ENCODE measurements at regions of chr1 and their contacts with region 1.

Region 1: DNA sequence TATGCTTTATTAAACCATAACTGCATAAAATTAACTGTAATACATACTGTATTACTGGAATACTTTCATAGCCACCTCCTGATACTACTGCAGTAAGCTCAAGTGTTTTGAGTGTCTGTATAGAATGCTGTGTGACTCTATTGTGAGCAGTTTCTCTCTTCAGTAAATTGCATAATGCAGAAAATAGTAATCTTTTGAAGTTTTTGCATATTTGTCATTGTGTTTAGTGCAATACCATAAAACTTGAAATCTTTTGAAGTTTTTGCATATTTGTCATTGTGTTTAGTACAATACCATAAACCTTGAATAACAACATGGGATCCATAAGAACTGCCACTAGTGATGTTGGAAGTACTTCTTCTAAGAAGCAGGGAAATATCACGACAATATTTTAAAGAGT is 11.2 kb downstream of the TPR start:
- DNase-seq: no peak
- H3K4me3 ChIP-seq: no peak overlapping the region
- H3K27ac ChIP-seq: no peak overlapping the region
- H3K4me1 ChIP-seq: no peaks in the 10 kb centered on the region
- H3K27me3 ChIP-seq: no peaks in the 10 kb centered on the region
- CTCF ChIP-seq: no peak
- POLR2A ChIP-seq: no peak

Region 2: DNA sequence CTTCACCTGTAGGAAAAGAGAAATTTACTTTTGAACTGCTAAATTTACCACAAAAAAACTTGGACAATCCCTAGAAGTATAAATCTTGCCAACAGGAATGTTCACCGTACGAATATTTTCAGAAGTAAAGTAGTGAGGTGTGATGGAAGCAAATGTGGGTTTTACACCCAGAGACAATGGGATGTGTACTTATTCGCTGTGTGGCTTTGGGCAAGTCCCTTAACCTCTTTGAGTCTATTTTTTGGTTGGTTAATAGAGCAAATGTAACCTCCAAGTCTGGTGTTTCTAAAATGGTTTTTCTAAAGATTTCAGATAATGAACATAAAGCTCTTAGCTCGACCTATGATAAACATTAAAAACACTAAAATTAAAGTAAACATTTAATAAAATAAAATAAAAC is 40.0 kb before region 1 on chr1:
- intact Hi-C with region 1: loop called (anchors 5 kb)
- DNase-seq: no peak
- H3K4me3 ChIP-seq: no peak overlapping the region
- H3K27ac ChIP-seq: no peak overlapping the region
- H3K4me1 ChIP-seq: no peaks in the 10 kb centered on the region
- H3K27me3 ChIP-seq: no peaks in the 10 kb centered on the region
- CTCF ChIP-seq: no peak
- POLR2A ChIP-seq: no peak

Region 3: DNA sequence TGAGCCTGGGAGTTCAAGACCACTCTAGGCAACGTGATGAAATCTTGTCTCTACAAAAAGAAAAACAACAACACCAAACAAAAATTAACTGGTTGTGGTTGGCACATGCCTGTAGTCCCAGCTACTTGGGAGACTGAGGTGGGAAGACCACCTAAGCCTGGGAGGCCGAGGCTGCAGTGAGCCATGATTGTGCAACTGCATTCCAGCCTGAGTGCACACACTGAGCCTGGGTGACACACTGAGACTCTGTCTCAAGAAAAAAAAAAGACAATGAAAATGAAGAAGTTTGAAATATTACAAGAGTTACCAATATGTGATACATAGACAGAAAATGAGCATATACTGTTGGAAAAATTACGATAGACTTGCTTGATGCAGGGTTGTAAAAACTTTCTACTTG is 65.1 kb after region 1 on chr1:
- intact Hi-C with region 1: no loop called
- DNase-seq: no peak
- H3K4me3 ChIP-seq: no peak overlapping the region
- H3K27ac ChIP-seq: no peak overlapping the region
- H3K4me1 ChIP-seq: no peaks in the 10 kb centered on the region
- H3K27me3 ChIP-seq: no peaks in the 10 kb centered on the region
- CTCF ChIP-seq: no peak
- POLR2A ChIP-seq: no peak

Region 4: DNA sequence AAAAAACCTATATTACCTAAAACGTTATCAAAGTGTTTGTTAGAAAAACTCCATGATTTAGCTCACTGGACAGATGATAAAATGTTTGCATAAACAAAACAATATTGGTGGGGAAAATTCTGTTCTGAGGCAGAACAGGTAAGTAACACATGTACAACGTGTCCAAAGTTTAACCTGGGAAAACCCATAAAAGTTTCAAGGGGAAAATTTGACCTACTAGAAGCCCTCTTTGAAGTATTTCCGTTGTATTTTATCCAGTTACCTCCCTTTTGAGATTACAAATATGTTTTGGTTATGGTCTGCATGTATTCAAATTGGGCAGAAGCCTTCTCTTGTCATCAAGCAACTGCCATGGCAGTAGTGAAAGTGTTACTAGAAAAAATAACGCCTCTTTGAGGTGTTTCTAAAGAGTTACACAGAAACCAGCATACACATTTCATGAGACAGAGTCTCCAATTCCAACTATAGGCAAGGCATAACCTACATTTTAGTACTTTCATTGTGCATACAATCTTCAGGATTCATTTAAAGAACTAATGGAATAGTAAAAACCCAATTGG is 155.0 kb after region 1 on chr1:
- intact Hi-C with region 1: no loop called
- DNase-seq: no peak
- H3K4me3 ChIP-seq: no peak overlapping the region
- H3K27ac ChIP-seq: no peak overlapping the region
- H3K4me1 ChIP-seq: no peaks in the 10 kb centered on the region
- H3K27me3 ChIP-seq: no peaks in the 10 kb centered on the region
- CTCF ChIP-seq: no peak
- POLR2A ChIP-seq: no peak